CD8-positive, alpha-beta T cell (primary cell): ENCODE measurements at regions of chr10 and their contacts with region 1.

Region 1: GRCh38 chr10:7121154-7121810 is 289.6 kb downstream of the SFMBT2 start:
- DNase-seq: peak; percentile 57 to 91 (median 78)
- ATAC-seq: peak; percentile 95
- H3K4me3 ChIP-seq: no peak overlapping the region
- H3K4me3 Mint-ChIP-seq: no peak overlapping the region
- H3K27ac ChIP-seq: no peak overlapping the region
- H3K27ac Mint-ChIP-seq: peak overlapping the region; percentile 69
- H3K4me1 ChIP-seq: peaks cover 4% of the 10 kb centered on the region
- H3K4me1 Mint-ChIP-seq: peaks cover 6% of the 10 kb centered on the region
- H3K27me3 ChIP-seq: no peaks in the 10 kb centered on the region
- H3K27me3 Mint-ChIP-seq: no peaks in the 10 kb centered on the region
- CTCF ChIP-seq: peak; percentile 61

Region 2: GRCh38 chr10:6755781-6756460 is 365.4 kb before region 1 on chr10:
- CTCF ChIA-PET with region 1: no interaction called
- POLR2A ChIA-PET with region 1: no interaction called
- intact Hi-C with region 1: no loop called
- DNase-seq: no peak
- ATAC-seq: no peak
- H3K4me3 ChIP-seq: no peak overlapping the region
- H3K4me3 Mint-ChIP-seq: no peak overlapping the region
- H3K27ac ChIP-seq: no peak overlapping the region
- H3K27ac Mint-ChIP-seq: no peak overlapping the region
- H3K4me1 ChIP-seq: no peaks in the 10 kb centered on the region
- H3K4me1 Mint-ChIP-seq: no peaks in the 10 kb centered on the region
- H3K27me3 ChIP-seq: peaks cover 0 to 2% of the 10 kb centered on the region in 2 experiments
- H3K27me3 Mint-ChIP-seq: peaks cover 36% of the 10 kb centered on the region
- CTCF ChIP-seq: no peak

Region 3: GRCh38 chr10:7054900-7055299 is 66.4 kb before region 1 on chr10:
- CTCF ChIA-PET with region 1: no interaction called
- POLR2A ChIA-PET with region 1: no interaction called
- intact Hi-C with region 1: no loop called
- DNase-seq: no peak
- ATAC-seq: no peak
- H3K4me3 ChIP-seq: no peak overlapping the region
- H3K4me3 Mint-ChIP-seq: no peak overlapping the region
- H3K27ac ChIP-seq: no peak overlapping the region
- H3K27ac Mint-ChIP-seq: no peak overlapping the region
- H3K4me1 ChIP-seq: no peaks in the 10 kb centered on the region
- H3K4me1 Mint-ChIP-seq: no peaks in the 10 kb centered on the region
- H3K27me3 ChIP-seq: no peaks in the 10 kb centered on the region
- H3K27me3 Mint-ChIP-seq: no peaks in the 10 kb centered on the region
- CTCF ChIP-seq: no peak

Region 4: GRCh38 chr10:7133278-7133677 is 12.0 kb after region 1 on chr10:
- CTCF ChIA-PET with region 1: interaction called, 19 read pairs
- POLR2A ChIA-PET with region 1: no interaction called
- intact Hi-C with region 1: no loop called
- DNase-seq: no peak
- ATAC-seq: no peak
- H3K4me3 ChIP-seq: no peak overlapping the region
- H3K4me3 Mint-ChIP-seq: no peak overlapping the region
- H3K27ac ChIP-seq: no peak overlapping the region
- H3K27ac Mint-ChIP-seq: no peak overlapping the region
- H3K4me1 ChIP-seq: peaks cover 7% of the 10 kb centered on the region
- H3K4me1 Mint-ChIP-seq: peaks cover 9% of the 10 kb centered on the region
- H3K27me3 ChIP-seq: peaks cover 0 to 3% of the 10 kb centered on the region in 2 experiments
- H3K27me3 Mint-ChIP-seq: peaks cover 2% of the 10 kb centered on the region
- CTCF ChIP-seq: no peak

Region 5: GRCh38 chr10:7192831-7193361 is 71.6 kb after region 1 on chr10:
- CTCF ChIA-PET with region 1: interaction called, 9 read pairs
- POLR2A ChIA-PET with region 1: interaction called, 3 read pairs
- intact Hi-C with region 1: loop called in 1 of 2 experiments (anchors 5 kb)
- DNase-seq: peak; percentile 28 to 87 (median 68)
- ATAC-seq: peak; percentile 87
- H3K4me3 ChIP-seq: peak overlapping the region; percentile 16 to 36
- H3K4me3 Mint-ChIP-seq: peak overlapping the region; percentile 82
- H3K27ac ChIP-seq: peak overlapping the region; percentile 55 to 64
- H3K27ac Mint-ChIP-seq: peak overlapping the region; percentile 98
- H3K4me1 ChIP-seq: peaks cover 66% of the 10 kb centered on the region
- H3K4me1 Mint-ChIP-seq: peaks cover 67% of the 10 kb centered on the region
- H3K27me3 ChIP-seq: no peaks in the 10 kb centered on the region
- H3K27me3 Mint-ChIP-seq: no peaks in the 10 kb centered on the region
- CTCF ChIP-seq: no peak

Region 6: DNA sequence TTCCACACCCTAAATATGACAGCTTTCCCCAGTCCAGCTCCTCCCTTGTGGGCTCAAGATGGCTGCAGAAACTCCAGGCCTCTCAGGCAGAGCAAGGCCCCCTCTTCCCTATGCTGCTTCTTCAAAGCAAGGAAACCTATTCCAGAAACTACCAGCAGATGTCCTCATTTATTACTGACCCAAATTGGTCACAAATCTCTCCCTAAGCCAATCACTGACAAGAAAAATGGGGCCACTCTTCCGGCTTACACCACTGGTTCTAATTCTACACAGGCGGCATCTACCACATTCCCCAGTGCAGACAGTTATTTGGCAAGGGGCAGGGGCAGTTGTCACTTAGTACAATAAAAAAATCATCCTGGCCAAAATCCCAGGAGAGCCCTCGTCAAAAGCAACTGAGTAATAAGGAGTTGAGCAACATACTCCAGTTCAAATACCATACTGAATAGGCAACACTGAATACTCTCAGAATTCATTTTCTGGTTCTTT is 139.2 kb after region 1 on chr10:
- CTCF ChIA-PET with region 1: interaction called, 4 read pairs
- POLR2A ChIA-PET with region 1: no interaction called
- intact Hi-C with region 1: loop called in 1 of 2 experiments (anchors 1 kb)
- DNase-seq: peak in 2 of 9 experiments; percentile 67 to 74
- ATAC-seq: no peak
- H3K4me3 ChIP-seq: no peak overlapping the region
- H3K4me3 Mint-ChIP-seq: no peak overlapping the region
- H3K27ac ChIP-seq: no peak overlapping the region
- H3K27ac Mint-ChIP-seq: peak overlapping the region; percentile 73
- H3K4me1 ChIP-seq: peaks cover 48% of the 10 kb centered on the region
- H3K4me1 Mint-ChIP-seq: peaks cover 52% of the 10 kb centered on the region
- H3K27me3 ChIP-seq: no peaks in the 10 kb centered on the region
- H3K27me3 Mint-ChIP-seq: no peaks in the 10 kb centered on the region
- CTCF ChIP-seq: no peak

Region 7: DNA sequence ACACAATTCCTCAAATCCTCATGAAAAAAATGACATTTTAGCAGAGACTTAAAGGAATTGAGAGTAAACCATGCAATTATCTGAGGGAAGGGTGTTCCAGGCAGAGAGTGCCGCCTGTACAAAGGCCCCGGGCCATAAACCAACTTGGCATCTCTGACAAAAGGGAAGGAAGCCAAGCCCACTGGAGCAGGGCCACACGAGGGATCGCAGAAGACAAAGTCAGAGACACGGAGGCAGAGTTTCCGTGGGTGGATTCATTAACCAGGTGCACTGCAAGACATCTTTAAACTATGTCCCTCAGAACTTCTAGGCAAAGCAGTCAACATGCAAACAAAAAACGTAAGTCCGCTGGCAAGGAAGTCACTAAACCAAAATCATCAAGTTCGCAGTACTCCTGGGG is 197.6 kb after region 1 on chr10:
- CTCF ChIA-PET with region 1: interaction called, 3 read pairs
- POLR2A ChIA-PET with region 1: no interaction called
- intact Hi-C with region 1: loop called in 1 of 2 experiments (anchors 10 kb)
- DNase-seq: no peak
- ATAC-seq: no peak
- H3K4me3 ChIP-seq: no peak overlapping the region
- H3K4me3 Mint-ChIP-seq: peak overlapping the region; percentile 50
- H3K27ac ChIP-seq: no peak overlapping the region
- H3K27ac Mint-ChIP-seq: peak overlapping the region; percentile 62
- H3K4me1 ChIP-seq: peaks cover 32% of the 10 kb centered on the region
- H3K4me1 Mint-ChIP-seq: peaks cover 68% of the 10 kb centered on the region
- H3K27me3 ChIP-seq: no peaks in the 10 kb centered on the region
- H3K27me3 Mint-ChIP-seq: no peaks in the 10 kb centered on the region
- CTCF ChIP-seq: no peak

Region 8: DNA sequence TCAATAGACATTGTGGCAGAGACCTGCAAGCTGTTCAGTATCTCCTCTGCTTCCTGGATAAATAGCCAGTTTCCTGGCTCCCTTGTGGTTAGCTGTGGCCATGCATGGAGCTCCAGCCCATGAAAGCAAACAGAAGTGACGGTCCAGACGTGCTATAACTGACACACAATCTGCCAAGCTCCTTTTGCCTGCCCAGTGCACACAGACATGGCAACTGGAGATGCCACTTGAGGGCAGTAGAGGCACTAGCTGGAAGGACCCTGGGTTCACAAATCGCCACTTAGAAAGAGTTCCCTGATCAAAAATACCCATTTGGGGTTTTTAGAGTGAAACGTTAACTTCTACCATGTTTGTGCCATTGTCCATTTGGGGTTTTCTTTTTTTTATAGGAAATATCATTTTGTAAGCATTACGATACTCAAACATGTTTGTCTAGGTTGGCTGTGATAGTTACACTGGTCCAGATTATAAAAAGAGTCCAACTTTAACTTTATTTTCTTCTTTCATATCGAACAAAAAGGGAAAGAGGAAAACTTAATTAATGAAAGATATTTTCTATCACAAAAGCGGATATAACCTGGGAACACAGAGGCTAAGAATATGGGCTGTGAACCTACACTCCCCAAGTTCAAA is 635.2 kb after region 1 on chr10:
- CTCF ChIA-PET with region 1: no interaction called
- POLR2A ChIA-PET with region 1: no interaction called
- intact Hi-C with region 1: no loop called
- DNase-seq: peak in 5 of 9 experiments; percentile 2 to 44 (median 31)
- ATAC-seq: no peak
- H3K4me3 ChIP-seq: no peak overlapping the region
- H3K4me3 Mint-ChIP-seq: no peak overlapping the region
- H3K27ac ChIP-seq: no peak overlapping the region
- H3K27ac Mint-ChIP-seq: no peak overlapping the region
- H3K4me1 ChIP-seq: no peaks in the 10 kb centered on the region
- H3K4me1 Mint-ChIP-seq: no peaks in the 10 kb centered on the region
- H3K27me3 ChIP-seq: no peaks in the 10 kb centered on the region
- H3K27me3 Mint-ChIP-seq: no peaks in the 10 kb centered on the region
- CTCF ChIP-seq: no peak